Pancreas (tissue), 10 donors: ENCODE measurements at regions of chr3 and their contacts with region 1.

Region 1: DNA sequence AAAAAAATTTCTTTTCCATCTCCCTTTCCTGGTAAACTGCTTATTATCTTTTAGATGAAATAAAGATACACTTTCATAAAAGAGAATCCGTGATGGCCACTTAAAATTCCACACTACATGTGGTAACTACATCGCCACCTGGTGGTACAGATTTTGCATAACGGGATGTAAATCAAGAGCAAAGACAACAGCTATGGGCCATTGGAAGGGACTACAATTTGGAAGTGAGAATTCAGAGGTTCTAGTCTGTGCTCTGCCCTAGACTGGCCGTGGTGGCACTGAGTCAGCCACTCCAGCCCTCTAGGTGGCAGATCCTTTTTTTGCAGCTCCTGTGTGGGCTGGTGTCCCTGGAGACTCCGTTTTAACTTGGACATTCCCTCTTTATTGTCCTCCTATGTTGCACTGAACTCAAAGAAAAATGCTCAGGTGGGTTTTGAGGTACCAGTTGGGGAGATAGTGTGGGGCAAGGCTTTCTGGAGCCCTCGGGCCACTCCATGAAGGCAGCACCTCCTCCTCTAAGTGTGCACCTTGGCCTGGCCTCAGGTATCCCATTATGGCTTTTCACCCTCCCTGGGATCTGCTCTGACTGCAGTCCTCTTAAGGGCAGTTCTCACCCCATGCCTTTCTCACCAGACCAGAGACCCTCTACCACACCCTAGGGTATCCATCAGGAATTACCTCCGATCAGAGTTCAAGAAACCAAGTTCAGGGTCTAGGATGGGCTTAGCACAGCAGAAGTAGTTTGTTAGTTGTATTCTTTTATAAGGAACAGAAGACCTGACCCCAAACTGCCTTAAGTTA is 54.9 kb downstream of the SPSB4 start:
- DNase-seq: peak in 4 of 6 donors; percentile 46 to 76 (median 65)
- ATAC-seq: peak; percentile 30 to 66 (median 48)
- H3K4me3 ChIP-seq: no peak overlapping the region
- H3K27ac ChIP-seq: no peak overlapping the region
- H3K4me1 ChIP-seq: peaks cover 12 to 16% (median 16%) of the 10 kb centered on the region in 3 donors
- H3K27me3 ChIP-seq: no peaks in the 10 kb centered on the region
- CTCF ChIP-seq: peak; percentile 43 to 69 (median 56)

Region 2: GRCh38 chr3:141011232-141011996 is 94.6 kb before region 1 on chr3:
- intact Hi-C with region 1: loop called in 1 of 3 experiments (anchors 5 kb)
- DNase-seq: peak; percentile 60 to 94 (median 80)
- ATAC-seq: peak; percentile 81 to 96 (median 92)
- H3K4me3 ChIP-seq: no peak overlapping the region
- H3K27ac ChIP-seq: no peak overlapping the region
- H3K4me1 ChIP-seq: no peaks in the 10 kb centered on the region
- H3K27me3 ChIP-seq: no peaks in the 10 kb centered on the region
- CTCF ChIP-seq: peak; percentile 44 to 76 (median 62)

Region 3: DNA sequence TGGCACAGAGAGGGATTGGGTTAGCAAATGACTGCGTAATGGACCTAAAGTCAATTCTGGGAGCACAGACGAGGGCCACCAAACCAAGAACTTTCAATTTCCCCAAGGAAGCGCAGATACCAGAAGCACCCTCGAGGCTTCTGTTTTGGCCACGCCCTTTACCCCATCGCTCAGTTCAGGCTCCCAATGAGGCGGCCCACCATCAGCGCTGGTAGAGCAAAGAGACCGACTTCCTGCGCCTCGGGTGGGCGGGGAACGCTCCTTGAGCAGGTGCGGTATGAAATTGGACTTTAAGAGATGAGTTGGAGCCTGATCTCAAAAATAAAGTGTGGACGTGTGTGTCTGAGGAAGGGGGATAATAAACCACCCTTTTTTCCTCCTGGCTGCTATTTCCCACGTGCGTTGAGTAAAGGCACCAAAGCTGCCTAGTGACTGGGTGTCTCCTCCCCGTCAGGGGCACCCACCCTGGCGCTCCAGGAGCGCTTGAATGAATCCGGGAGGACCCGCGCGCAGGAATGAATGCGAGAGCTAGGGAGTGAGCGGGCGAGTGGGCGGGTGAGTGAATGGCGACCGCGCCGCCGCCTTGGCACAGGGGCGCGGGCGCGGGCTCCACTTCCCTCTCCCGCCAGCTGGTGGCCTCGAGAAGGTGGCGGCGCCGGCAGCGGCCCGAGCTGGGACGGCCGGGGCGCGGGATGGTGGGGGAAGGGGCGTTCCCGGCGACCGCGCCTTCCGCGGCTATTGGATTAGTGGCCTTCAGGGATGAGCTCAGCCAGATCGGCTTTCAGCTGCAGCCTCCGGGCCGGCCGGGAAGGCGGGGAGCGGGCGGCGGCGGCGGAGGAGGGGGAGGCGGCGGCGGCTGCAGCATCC is 55.2 kb before region 1 on chr3 and contains the start of gene SPSB4:
- intact Hi-C with region 1: loop called in 1 of 3 experiments (anchors 10 kb)
- DNase-seq: peak; percentile 84 to 95 (median 90)
- ATAC-seq: peak; percentile 79 to 91 (median 86)
- H3K4me3 ChIP-seq: peak within 1 kb of the TSS; percentile 31 to 67 (median 52)
- H3K27ac ChIP-seq: peak within 1 kb of the TSS; percentile 56 to 76 (median 68)
- H3K4me1 ChIP-seq: no peaks in the 10 kb centered on the region
- H3K27me3 ChIP-seq: no peaks in the 10 kb centered on the region
- CTCF ChIP-seq: peak in 3 of 4 donors; percentile 28 to 57 (median 40)
- total RNA-seq, gene SPSB4: 9.2 to 20.2 (median 12.1) TPM

Region 4: GRCh38 chr3:142385078-142385477 is 1279.0 kb after region 1 on chr3:
- intact Hi-C with region 1: no loop called
- DNase-seq: no peak
- ATAC-seq: no peak
- H3K4me3 ChIP-seq: no peak overlapping the region
- H3K27ac ChIP-seq: no peak overlapping the region
- H3K4me1 ChIP-seq: no peaks in the 10 kb centered on the region
- H3K27me3 ChIP-seq: no peaks in the 10 kb centered on the region
- CTCF ChIP-seq: no peak